HEK293 (cell line): ENCODE measurements at regions of chr11 and their contacts with region 1.

Region 1: DNA sequence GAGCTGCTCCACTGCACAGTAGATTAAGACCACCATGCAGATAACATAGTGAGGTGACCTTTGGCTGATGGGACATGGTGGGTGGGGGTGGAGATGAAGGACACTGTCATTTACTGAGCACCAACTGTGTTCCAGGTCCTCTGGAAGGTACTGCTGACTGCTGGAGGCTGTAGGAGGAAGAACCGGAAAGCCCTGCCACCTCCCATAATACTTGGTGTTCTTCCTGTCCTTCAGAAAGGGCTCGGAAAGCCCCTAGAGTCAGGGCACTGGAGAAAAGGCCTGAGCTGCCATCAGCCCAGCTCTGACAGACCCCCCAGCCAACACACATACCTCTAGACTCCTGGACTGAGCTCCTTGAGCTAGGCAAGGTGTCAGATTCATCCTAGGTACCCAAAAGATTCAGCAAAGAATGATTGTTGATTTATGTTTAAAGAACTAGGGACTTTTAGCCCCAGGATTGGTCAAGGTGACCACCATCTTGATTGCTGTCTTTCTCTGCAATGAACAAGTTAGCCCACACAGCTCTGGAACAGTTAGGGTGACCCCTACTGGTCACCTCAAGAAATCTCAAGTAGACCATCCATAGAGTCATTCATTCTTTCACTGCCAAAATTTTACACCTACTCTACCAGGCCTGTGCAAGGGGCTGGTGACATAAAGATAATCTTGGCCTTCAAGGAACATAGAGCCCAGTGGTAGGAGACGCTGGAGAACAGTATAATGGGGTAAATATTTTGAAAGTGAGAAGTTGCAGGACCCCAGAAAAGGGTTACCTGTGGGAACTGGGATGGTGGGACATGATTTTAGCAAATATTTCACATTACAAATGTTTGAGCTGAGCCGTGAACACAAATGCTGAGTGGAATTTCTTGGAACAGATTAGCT is 39.4 kb downstream of the IRAG1 start:
- H3K4me3 ChIP-seq: no peak overlapping the region
- H3K27ac ChIP-seq: no peak overlapping the region
- H3K4me1 ChIP-seq: no peaks in the 10 kb centered on the region
- CTCF ChIP-seq: 0 out of 2 replicates have a peak, but pooled peaks have one; percentile 22

Region 2: DNA sequence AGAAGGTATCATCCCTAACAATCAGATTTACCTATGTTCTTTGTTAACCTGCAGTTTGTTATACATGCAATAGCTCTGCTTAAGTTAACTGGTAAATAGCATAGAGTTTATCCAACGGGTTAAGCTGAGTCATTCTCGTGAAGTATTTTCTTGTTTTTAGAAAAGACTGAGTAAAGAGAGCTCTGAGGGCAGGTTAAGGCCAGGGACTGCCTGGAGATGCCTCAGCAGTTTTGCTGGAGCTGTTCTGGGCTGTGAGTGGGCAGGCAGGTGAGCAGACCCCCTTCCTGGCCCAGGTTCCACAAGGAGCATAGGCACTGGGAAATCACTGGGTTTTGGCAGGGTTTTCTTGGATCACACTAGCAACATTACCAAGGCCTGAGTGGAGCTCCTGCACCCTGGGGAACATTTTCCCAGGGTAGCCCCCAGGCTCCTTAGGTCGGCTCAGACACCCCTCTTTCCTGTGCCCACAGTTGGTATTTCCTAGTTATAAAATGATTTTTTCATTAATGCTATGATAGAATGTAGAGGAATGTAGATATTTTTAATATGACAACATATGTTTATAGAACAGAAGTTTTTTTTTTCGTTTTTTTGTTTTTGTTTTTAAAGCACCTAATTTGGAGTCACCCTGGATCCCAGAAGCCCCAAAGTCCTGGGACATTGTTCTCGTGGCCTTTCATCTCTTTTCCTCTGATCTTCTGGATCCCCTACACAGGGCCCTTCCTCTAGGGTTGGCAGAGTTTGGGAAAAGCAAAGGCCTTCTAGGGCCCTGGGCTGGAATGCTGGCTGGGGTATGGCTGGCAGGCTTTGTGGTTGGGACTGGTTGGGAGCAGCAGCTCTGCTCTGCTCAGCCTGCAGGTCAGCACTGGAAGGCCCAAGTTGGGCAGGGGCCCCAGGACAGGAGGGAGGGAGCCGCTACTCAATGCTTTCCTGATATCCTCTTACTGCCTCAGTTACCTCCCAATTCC is 12.7 kb after region 1 on chr11:
- CTCF ChIA-PET with region 1: interaction called, 41 read pairs
- POLR2A ChIA-PET with region 1: no interaction called
- H3K4me3 ChIP-seq: no peak overlapping the region
- H3K27ac ChIP-seq: no peak overlapping the region
- H3K4me1 ChIP-seq: no peaks in the 10 kb centered on the region; the same call in 1 of the 2 replicates
- CTCF ChIP-seq: no peak